ENCODE measurements at regions of chr18 and their contacts with region 1.

Region 1: DNA sequence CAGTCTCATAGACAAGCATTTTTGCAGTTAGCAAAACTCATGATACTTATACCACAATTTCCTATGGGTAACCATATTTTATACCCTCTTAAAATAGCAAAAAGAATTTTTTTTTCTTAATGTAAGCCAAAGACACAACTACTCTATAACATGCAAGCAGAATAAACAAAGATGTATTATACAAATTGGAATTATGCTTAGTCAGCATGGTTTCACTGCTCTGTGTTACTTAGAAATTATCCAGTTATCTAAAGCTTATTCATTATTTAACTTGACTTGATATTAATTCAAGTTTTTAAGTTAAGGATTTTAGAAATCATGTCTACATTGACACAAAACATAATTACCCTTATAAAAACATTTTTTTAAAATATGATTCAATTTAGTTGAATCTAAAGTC is 449.8 kb upstream of the CDH2 start:
- DNase-seq: no peak
- ATAC-seq: no peak
- H3K4me3 ChIP-seq: no peak overlapping the region
- H3K4me3 Mint-ChIP-seq: no peak overlapping the region
- H3K27ac ChIP-seq: no peak overlapping the region
- H3K27ac Mint-ChIP-seq: no peak overlapping the region
- H3K4me1 ChIP-seq: no peaks in the 10 kb centered on the region
- H3K4me1 Mint-ChIP-seq: no peaks in the 10 kb centered on the region
- H3K27me3 ChIP-seq: no peaks in the 10 kb centered on the region
- H3K27me3 Mint-ChIP-seq: no peaks in the 10 kb centered on the region
- CTCF ChIP-seq: no peak

Region 2: DNA sequence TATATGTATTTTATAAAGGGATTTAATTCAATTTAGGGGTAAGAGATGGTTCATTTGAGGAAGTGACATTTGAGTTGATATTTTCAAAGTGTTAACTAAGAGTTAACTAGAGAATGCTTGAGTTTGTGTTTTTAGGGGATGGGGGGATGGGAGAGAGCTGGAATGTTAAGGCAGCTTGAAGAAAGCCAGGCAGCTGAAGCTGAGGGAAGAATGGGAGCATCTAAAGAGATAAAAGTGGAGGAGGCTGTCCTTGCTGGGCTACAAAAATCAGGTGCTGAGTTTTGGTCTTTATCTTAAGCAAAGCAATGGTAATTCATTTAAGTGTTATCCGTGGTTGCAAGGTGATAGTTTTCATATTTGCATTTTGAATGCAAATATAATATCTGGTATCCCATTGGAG is 1450.8 kb before region 1 on chr18:
- CTCF ChIA-PET with region 1: no interaction called
- POLR2A ChIA-PET with region 1: no interaction called
- intact Hi-C with region 1: no loop called
- DNase-seq: no peak
- ATAC-seq: no peak
- H3K4me3 ChIP-seq: no peak overlapping the region
- H3K4me3 Mint-ChIP-seq: no peak overlapping the region
- H3K27ac ChIP-seq: no peak overlapping the region
- H3K27ac Mint-ChIP-seq: no peak overlapping the region
- H3K4me1 ChIP-seq: no peaks in the 10 kb centered on the region
- H3K4me1 Mint-ChIP-seq: no peaks in the 10 kb centered on the region
- H3K27me3 ChIP-seq: no peaks in the 10 kb centered on the region
- H3K27me3 Mint-ChIP-seq: no peaks in the 10 kb centered on the region
- CTCF ChIP-seq: no peak

Region 3: DNA sequence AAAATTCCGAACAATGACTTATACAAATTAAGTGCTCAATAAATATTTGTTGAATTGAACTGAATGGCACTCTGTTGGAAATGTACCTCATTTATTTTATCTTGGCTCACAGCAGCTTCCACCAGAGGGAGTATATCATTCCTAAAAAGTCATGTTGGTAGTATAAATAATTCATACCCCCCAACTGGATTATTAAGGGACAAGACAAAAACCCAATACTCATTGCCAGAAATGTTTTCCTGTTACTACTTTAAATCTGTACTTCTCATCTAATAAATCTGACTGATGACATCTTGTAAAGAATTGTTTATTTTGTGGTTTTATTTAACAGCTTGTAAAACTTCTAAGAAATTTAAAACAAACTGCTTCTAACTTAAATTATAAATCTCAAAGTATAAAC is 613.7 kb before region 1 on chr18:
- CTCF ChIA-PET with region 1: no interaction called
- POLR2A ChIA-PET with region 1: no interaction called
- intact Hi-C with region 1: no loop called
- DNase-seq: no peak
- ATAC-seq: no peak
- H3K4me3 ChIP-seq: no peak overlapping the region
- H3K4me3 Mint-ChIP-seq: no peak overlapping the region
- H3K27ac ChIP-seq: no peak overlapping the region
- H3K27ac Mint-ChIP-seq: no peak overlapping the region
- H3K4me1 ChIP-seq: no peaks in the 10 kb centered on the region
- H3K4me1 Mint-ChIP-seq: no peaks in the 10 kb centered on the region
- H3K27me3 ChIP-seq: no peaks in the 10 kb centered on the region
- H3K27me3 Mint-ChIP-seq: no peaks in the 10 kb centered on the region
- CTCF ChIP-seq: no peak

Region 4: GRCh38 chr18:28657966-28658365 is 31.2 kb after region 1 on chr18:
- CTCF ChIA-PET with region 1: no interaction called
- POLR2A ChIA-PET with region 1: no interaction called
- intact Hi-C with region 1: no loop called
- DNase-seq: no peak
- ATAC-seq: no peak
- H3K4me3 ChIP-seq: no peak overlapping the region
- H3K4me3 Mint-ChIP-seq: no peak overlapping the region
- H3K27ac ChIP-seq: no peak overlapping the region
- H3K27ac Mint-ChIP-seq: no peak overlapping the region
- H3K4me1 ChIP-seq: no peaks in the 10 kb centered on the region
- H3K4me1 Mint-ChIP-seq: no peaks in the 10 kb centered on the region
- H3K27me3 ChIP-seq: no peaks in the 10 kb centered on the region
- H3K27me3 Mint-ChIP-seq: no peaks in the 10 kb centered on the region
- CTCF ChIP-seq: no peak

Region 5: DNA sequence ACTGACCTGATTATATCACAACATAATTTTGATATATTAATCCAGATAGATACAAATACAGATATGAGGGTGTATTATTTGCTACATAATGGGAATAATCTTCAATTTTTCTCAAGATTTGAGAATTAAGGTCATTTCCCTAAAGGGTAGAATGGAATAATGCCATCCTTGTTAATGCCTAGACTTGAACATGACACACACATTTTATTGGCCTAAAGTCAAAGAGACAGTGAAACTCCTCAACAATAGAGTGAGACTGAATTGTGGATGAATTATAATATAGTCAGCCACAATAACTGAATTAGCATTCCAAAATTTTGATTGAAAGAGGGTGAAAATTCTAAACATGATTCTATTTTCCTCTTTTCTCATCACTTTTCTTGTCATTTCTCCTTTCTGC is 56.2 kb after region 1 on chr18:
- CTCF ChIA-PET with region 1: no interaction called
- POLR2A ChIA-PET with region 1: no interaction called
- intact Hi-C with region 1: loop called in 1 of 2 experiments (anchors 5 kb)
- DNase-seq: no peak
- ATAC-seq: no peak
- H3K4me3 ChIP-seq: no peak overlapping the region
- H3K4me3 Mint-ChIP-seq: no peak overlapping the region
- H3K27ac ChIP-seq: no peak overlapping the region
- H3K27ac Mint-ChIP-seq: no peak overlapping the region
- H3K4me1 ChIP-seq: no peaks in the 10 kb centered on the region
- H3K4me1 Mint-ChIP-seq: no peaks in the 10 kb centered on the region
- H3K27me3 ChIP-seq: no peaks in the 10 kb centered on the region
- H3K27me3 Mint-ChIP-seq: no peaks in the 10 kb centered on the region
- CTCF ChIP-seq: no peak

Measured in CD4-positive, alpha-beta T cell (primary cell).